ENCODE measurements at regions of chr14 and their contacts with region 1.

Region 1: GRCh38 chr14:41201721-41202120 is 405.0 kb upstream of the LRFN5 start:
- ATAC-seq: no peak
- H3K4me3 ChIP-seq: no peak overlapping the region
- H3K27ac ChIP-seq: no peak overlapping the region
- H3K4me1 ChIP-seq: no peaks in the 10 kb centered on the region

Region 2: GRCh38 chr14:41120402-41120801 is 81.3 kb before region 1 on chr14:
- in situ Hi-C with region 1: loop called in 1 of 9 experiments (anchors 25 kb)
- ATAC-seq: peak in 1 of 8 experiments; percentile 56
- H3K4me3 ChIP-seq: no peak overlapping the region
- H3K27ac ChIP-seq: no peak overlapping the region
- H3K4me1 ChIP-seq: peaks cover 6% of the 10 kb centered on the region in 2 donors

Region 3: DNA sequence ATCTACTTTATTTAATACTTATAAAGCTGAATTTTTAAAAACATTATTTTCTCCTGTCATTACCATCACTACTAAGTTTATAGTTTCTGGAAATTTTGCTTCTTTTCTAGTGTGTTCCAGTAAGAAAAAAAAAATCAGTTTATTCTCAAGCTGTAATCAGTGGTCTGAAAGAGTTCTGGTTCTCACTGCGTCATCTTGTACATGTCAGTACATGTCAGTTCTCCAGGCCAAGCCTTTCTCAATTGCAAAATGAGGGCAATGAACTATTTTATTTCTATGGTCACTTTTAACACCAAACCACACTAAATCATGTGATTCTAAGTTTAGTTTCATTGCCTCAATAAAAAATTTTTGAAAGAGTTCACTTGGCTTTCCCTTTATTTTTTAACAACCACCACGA is 64.0 kb before region 1 on chr14:
- in situ Hi-C with region 1: loop called in 1 of 9 experiments (anchors 10 kb)
- ATAC-seq: peak in 2 of 8 experiments; percentile 20 to 45
- H3K4me3 ChIP-seq: no peak overlapping the region
- H3K27ac ChIP-seq: no peak overlapping the region
- H3K4me1 ChIP-seq: no peaks in the 10 kb centered on the region

Measured in motor neuron (in vitro differentiated cells).